Transverse colon (tissue), 4 donors: ENCODE measurements at regions of chr9 and their contacts with region 1.

Region 1: DNA sequence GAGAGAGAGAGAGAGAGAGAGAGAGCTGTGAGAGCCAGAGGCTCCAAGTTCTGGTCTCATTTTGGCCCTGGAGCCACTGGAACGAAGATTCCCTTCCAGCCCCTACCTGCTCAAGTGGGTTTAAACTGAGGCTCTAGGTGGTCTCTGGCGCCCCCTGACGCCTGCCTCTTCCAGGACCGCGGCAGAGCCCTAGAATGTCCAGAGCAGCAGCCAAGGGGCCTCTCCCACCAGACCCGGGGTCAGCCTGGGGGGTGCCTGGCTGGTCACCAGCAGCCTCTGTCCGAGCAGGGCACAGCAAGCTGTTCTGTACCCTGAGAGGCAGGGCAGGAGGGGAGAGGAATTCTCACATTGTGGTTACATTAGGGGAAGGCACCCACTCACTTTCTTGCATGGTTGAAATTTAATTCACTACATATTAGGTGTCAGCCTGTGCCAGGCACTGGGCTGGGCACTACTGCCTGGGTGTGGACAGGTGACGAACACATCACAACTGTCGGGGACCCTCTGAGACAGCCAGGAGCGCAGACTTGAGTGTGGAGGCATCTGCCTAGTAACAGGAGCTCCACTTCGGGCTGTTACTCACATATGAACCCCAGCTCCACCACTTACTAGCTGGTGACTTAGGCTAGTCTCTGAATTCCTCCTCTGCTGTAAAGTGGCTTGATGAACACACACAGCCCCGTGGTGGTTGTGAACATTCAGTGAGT is 44.5 kb downstream of the AMBP start:
- DNase-seq: no peak
- H3K4me3 ChIP-seq: no peak overlapping the region
- H3K27ac ChIP-seq: no peak overlapping the region
- H3K4me1 ChIP-seq: no peaks in the 10 kb centered on the region
- H3K27me3 ChIP-seq: no peaks in the 10 kb centered on the region
- CTCF ChIP-seq: peak in 3 of 5 experiments; percentile 21 to 34 (median 27)
- EP300 ChIP-seq: no peak
- POLR2A ChIP-seq: no peak

Region 2: DNA sequence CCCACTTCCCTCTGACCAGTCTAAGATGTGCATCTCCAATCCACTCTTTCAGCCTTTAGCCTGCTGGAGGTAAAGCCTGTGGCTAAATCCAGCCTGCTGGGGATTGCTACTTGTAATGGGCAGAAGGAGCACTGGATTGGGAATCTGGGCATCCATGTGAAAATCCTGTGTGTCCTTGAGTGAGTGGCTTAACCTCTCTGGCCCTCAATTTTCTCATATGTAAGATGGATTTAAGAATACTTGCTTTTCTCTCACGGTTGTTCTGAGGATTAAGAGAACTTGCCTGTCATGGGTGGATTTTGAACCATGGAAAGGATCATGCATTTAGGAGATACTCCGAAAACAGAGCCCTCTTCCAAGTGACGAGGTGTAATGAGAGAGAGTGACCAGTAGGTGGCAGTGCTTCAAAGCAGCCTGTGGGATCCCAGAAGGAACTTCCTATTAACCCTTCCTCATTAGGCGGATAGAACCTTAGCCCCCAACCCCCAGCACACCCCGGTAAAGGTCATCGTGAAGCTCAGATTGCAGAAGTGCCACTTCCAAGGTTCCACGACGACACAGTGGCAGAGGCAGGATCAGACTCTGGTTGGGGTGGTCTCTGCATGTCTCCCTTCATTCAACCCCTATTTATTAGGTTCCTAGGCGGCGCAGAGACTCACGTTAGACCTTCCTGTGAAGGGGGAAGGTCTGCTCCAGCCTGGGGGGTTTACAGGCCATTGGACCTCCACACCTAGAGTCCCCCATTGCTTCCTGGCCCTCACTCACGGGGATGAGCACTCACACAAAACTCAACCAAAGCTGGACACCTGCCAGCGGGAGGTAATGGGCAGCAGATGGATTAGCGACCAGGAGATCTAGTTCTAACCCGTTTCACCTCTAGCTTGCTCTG is 226.1 kb before region 1 on chr9:
- in situ Hi-C with region 1: loop called in 1 of 4 experiments (anchors 25 kb)
- intact Hi-C with region 1: loop called (anchors 2 kb)
- DNase-seq: peak; percentile 53
- H3K4me3 ChIP-seq: peak overlapping the region in 2 of 4 donors; percentile 13 to 18
- H3K27ac ChIP-seq: no peak overlapping the region
- H3K4me1 ChIP-seq: peaks cover 0 to 5% (median 4%) of the 10 kb centered on the region in 4 donors
- H3K27me3 ChIP-seq: peaks cover 4% of the 10 kb centered on the region
- CTCF ChIP-seq: peak; percentile 81 to 92 (median 88)
- EP300 ChIP-seq: no peak
- POLR2A ChIP-seq: no peak

Region 3: GRCh38 chr9:113853324-113853723 is 180.2 kb before region 1 on chr9:
- in situ Hi-C with region 1: loop called in 1 of 4 experiments (anchors 25 kb)
- intact Hi-C with region 1: no loop called
- DNase-seq: no peak
- H3K4me3 ChIP-seq: no peak overlapping the region
- H3K27ac ChIP-seq: no peak overlapping the region
- H3K4me1 ChIP-seq: no peaks in the 10 kb centered on the region
- H3K27me3 ChIP-seq: no peaks in the 10 kb centered on the region
- CTCF ChIP-seq: peak; percentile 29 to 52 (median 44)
- EP300 ChIP-seq: no peak
- POLR2A ChIP-seq: no peak

Region 4: DNA sequence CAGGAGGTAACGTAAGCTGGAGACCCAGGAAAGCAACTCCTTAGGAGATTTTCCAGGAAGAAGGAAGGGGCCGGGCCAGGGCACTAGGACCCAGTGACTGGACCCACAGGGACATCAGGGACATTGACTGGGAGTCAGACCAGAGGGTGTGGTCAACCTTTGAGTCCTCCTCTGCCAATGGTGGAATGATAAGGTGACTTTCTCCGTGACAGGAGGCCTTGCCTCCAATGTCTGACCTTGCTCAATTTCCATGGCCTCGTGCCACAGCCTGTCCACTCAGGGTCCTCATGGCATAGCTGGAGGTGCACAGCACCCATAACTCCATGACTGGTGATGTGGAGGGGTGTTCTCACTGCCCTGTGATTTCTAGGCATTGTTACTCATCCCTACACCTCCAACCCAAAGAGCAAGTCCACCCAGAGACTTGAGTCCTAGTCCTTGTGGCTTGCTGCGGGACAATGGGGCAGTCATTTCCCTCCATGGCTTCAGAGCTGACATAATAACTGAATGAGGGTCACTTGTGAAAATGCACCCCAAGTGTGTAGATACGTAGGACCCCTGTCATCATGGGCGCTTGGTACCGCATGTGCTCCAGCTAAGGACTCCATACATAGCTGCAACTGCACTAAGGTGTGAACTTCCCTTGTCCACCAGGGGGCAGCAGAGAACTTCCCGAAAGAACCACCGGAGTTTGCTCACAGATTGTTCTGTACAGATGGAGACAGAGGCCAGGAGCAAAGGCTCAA is 48.6 kb after region 1 on chr9:
- in situ Hi-C with region 1: no loop called
- intact Hi-C with region 1: no loop called
- DNase-seq: peak; percentile 92
- H3K4me3 ChIP-seq: no peak overlapping the region
- H3K27ac ChIP-seq: peak overlapping the region; percentile 60 to 78 (median 77)
- H3K4me1 ChIP-seq: peaks cover 5 to 32% (median 24%) of the 10 kb centered on the region in 4 donors
- H3K27me3 ChIP-seq: no peaks in the 10 kb centered on the region
- CTCF ChIP-seq: peak; percentile 90 to 94 (median 92)
- EP300 ChIP-seq: no peak
- POLR2A ChIP-seq: no peak